Right ventricle myocardium superior (tissue), 1 donor: ENCODE measurements at regions of chr16 and their contacts with region 1.

Region 1: GRCh38 chr16:46607529-46607928 is 13.7 kb downstream of the SHCBP1 start:
- DNase-seq: no peak
- ATAC-seq: no peak

Region 2: GRCh38 chr16:46404048-46404447 is 203.5 kb before region 1 on chr16:
- intact Hi-C with region 1: no loop called
- DNase-seq: no peak
- ATAC-seq: no peak

Region 3: DNA sequence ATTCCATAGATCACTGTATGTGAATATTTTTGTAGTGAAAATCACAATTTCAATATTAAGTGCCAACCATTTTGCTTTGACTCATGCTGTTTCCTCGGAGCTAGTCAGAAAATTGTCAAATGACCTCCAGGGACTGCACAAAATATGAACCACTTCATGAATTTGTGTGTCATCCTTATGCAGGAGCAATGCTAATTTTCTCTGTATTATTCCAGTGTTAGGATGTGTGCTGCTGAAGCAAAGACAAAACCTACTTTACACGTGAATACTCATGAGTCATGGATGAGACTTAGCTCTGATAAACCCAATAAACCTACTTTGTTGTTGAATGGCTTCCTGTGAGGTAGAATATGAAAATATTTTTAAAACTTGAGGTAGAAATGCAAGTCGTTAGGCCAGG is 51.6 kb before region 1 on chr16:
- intact Hi-C with region 1: loop called (anchors 10 kb)
- DNase-seq: no peak
- ATAC-seq: no peak